Activated T-helper 2 cell treated with anti-CD3 and anti-CD28 coated beads, Interferon-gamma antibody, Interleukin-2, Interleukin-4, amounts not matched to agents 10 μg/mL and 5 μg/mL and 100 μg/mL, durations not matched to agents 14 hours and 24 hours and 36 hours (primary cell): ENCODE measurements at regions of chr9 and their contacts with region 1.

Region 1: DNA sequence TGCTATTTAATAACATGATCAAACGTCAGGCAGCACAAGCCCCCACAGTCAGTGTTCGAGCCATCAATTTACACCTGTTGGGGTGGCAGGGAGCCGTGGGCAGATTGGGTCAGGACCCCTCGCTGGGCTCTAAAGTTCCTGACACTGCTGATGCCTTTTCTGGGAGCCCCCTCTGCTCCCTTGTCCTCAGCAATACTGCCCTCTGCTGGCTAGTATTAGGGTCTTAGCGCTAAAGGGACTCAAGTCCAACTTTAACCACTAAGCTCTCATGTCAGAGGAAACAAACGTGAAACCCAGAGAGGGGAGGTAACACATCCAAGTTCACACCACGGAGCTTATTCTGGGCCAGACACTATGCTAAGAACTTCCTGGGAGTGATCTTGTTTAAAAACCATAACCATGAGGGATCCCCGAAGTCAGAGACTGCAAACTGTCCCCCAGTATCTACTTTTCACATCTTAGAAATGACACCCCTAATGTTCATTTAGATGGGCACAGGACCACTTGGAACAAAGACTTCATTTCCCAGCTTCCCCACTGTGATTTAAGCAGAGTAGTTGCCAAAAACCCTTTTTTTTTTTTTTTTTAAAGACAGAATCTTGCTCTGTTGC is 20.4 kb downstream of the ANKS6 start:
- DNase-seq: no peak
- H3K4me3 Mint-ChIP-seq: no peak overlapping the region
- H3K27ac Mint-ChIP-seq: no peak overlapping the region
- H3K4me1 Mint-ChIP-seq: no peaks in the 10 kb centered on the region
- H3K27me3 Mint-ChIP-seq: no peaks in the 10 kb centered on the region

Region 2: DNA sequence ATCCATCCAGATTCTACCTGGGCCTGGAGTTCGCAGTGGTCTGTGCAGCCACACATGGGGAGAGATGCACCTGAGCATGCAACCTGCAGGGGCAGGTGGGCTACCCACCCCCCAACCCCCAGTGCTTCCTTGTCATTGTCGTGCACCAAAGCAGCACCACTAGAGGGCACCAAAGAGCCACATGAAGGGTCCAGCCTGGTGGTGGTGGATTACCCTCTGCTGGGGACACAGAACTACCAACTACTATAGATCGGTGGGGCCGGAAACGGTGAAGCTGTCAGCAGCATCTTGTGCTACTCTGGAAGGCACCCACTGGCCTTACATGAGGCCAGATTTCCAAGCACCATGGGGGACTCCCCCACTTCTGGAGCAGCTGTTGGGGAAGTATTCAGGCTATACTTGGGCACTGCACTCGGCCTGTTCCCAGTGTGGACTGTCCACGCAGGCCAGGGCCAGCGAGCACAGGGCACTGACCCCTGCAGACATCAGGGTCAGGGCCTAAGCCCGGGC is 460.3 kb before region 1 on chr9:
- intact Hi-C with region 1: loop called (anchors 1 kb)
- DNase-seq: peak; percentile 65
- H3K4me3 Mint-ChIP-seq: no peak overlapping the region
- H3K27ac Mint-ChIP-seq: no peak overlapping the region
- H3K4me1 Mint-ChIP-seq: peaks cover 2% of the 10 kb centered on the region
- H3K27me3 Mint-ChIP-seq: peaks cover 4% of the 10 kb centered on the region

Region 3: DNA sequence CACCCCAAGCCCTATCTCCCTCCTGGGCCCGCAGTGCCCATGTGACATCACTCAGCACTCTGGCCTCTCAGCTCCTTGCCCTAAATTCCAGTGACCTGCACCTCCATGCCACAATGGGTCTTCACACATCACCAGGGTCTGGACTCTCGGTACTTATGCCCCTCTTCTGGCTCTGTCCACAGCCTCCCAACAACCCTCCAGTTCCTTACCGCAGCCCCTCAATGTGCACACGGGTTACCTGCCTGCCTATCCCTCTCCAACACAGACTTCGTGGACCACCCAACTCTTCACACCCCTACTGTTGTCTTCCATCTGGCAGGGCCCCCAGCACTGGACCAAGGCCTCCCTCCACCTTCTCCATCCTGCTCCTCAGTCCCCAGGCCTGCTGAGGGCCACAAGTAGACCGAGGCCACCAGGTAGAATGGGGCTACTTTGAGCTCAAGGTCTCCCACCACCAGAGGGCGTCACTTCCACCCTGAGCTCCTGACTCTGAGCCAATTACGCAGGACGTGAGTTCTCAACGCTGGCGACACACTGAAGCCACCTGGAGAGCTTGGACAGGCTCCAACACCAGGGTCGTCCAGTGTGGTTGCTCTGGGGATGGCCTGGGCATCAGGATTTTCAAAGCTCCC is 239.3 kb before region 1 on chr9:
- intact Hi-C with region 1: loop called (anchors 5 kb)
- DNase-seq: peak; percentile 13
- H3K4me3 Mint-ChIP-seq: no peak overlapping the region
- H3K27ac Mint-ChIP-seq: no peak overlapping the region
- H3K4me1 Mint-ChIP-seq: no peaks in the 10 kb centered on the region
- H3K27me3 Mint-ChIP-seq: peaks cover 2% of the 10 kb centered on the region

Region 4: GRCh38 chr9:98658951-98659351 is 117.0 kb before region 1 on chr9:
- intact Hi-C with region 1: no loop called
- DNase-seq: no peak
- H3K4me3 Mint-ChIP-seq: no peak overlapping the region
- H3K27ac Mint-ChIP-seq: no peak overlapping the region
- H3K4me1 Mint-ChIP-seq: no peaks in the 10 kb centered on the region
- H3K27me3 Mint-ChIP-seq: peaks cover 9% of the 10 kb centered on the region